ENCODE measurements at regions of chr5 and their contacts with region 1.

Region 1: DNA sequence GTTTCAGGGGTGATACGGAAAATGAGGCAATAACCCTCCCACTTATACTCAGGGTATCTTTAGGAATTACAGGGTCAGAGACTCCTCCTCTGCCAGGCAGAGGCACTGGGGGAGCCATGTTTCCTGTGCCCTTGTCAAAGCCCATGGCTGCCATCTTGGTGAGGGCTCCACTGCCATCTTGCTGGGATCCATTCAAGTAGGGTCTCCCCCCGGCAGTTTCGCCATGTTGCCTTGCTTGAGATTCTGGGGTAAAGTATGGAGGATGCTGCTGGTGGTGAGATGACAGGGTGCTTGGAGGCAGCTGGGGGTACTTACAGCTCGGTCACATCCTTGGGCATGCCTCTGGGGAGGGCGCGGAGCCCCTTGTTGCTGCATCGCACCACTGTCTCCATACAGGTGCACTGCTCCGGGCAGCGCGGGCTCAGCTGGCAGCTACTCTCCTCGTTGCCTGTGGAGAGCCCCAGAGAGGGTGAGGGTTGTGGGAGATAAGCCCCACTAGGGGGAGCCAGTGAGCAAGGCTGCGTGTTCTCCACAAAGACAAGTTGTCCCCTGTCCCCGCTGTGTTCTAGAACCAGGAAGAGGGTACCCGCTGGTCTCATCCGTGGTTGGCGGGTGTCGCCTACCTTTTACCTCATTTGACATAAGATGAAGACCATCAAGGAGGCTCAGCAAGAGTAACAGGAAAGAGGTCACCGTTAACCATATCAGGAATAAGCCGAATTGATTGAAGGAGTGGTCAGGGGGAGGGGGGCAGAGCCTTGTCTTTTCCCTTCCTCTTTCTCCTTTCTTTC is 169.0 kb upstream of the PANK3 start:
- DNase-seq: peak; percentile 24 to 67 (median 49)
- ATAC-seq: peak; percentile 49 to 80 (median 76)
- H3K4me3 ChIP-seq: no peak overlapping the region
- H3K27ac ChIP-seq: no peak overlapping the region
- H3K4me1 ChIP-seq: no peaks in the 10 kb centered on the region
- H3K27me3 ChIP-seq: no peaks in the 10 kb centered on the region
- CTCF ChIP-seq: peak; percentile 44 to 68 (median 52)
- POLR2A ChIP-seq: no peak

Region 2: DNA sequence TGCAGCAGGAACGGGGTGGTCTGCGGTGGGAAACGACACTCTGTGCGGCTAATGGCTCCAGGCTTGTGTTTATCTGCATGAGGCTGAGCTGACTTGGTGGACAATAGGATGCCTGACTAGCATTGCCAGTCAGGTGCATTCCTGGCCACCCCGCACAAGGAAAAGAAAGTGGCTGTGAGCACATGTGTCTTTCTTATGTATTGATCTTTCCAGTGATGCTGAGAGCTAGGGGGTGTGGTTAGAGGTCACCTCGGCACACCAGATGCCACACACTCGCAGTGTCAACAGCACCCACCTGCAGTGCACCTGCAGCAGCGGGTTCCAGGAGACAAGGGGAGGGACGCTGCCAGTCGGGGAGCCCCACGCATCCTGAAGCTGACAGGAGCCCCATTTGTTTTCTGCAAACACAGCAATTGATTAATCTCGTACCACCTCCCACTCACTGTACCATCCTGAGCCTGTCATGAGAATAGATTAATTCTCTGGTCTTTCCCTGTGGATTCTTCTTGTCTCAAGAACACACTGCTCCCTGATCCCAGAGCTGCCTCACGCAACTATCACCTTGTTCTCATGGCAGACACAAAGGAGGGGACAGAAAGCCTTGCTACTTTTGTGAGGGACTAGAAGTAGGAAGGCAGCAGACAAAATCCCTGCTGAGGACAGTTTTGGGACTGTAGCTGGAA is 708.5 kb before region 1 on chr5:
- intact Hi-C with region 1: no loop called
- DNase-seq: no peak
- ATAC-seq: peak in 1 of 4 donors; percentile 8
- H3K4me3 ChIP-seq: no peak overlapping the region
- H3K27ac ChIP-seq: no peak overlapping the region
- H3K4me1 ChIP-seq: peaks cover 0 to 6% (median 0%) of the 10 kb centered on the region in 12 donors
- H3K27me3 ChIP-seq: no peaks in the 10 kb centered on the region
- CTCF ChIP-seq: no peak
- POLR2A ChIP-seq: no peak

Region 3: GRCh38 chr5:168874713-168875380 is 126.7 kb after region 1 on chr5:
- intact Hi-C with region 1: loop called in 4 of 10 experiments (anchors 5 to 10 kb)
- DNase-seq: no peak
- ATAC-seq: peak in 1 of 4 donors; percentile 24
- H3K4me3 ChIP-seq: no peak overlapping the region
- H3K27ac ChIP-seq: no peak overlapping the region
- H3K4me1 ChIP-seq: peaks cover 0 to 10% (median 1%) of the 10 kb centered on the region in 12 donors
- H3K27me3 ChIP-seq: no peaks in the 10 kb centered on the region
- CTCF ChIP-seq: peak in 6 of 12 donors; percentile 17 to 45 (median 34)
- POLR2A ChIP-seq: no peak

Region 4: GRCh38 chr5:168879929-168880328 is 131.7 kb after region 1 on chr5:
- intact Hi-C with region 1: loop called in 3 of 10 experiments (anchors 5 to 10 kb)
- DNase-seq: peak in 2 of 5 donors; percentile 35 to 39
- ATAC-seq: peak in 3 of 4 donors; percentile 53 to 70 (median 59)
- H3K4me3 ChIP-seq: no peak overlapping the region
- H3K27ac ChIP-seq: peak overlapping the region in 4 of 12 donors; percentile 13 to 45 (median 32)
- H3K4me1 ChIP-seq: peaks cover 0 to 20% (median 3%) of the 10 kb centered on the region in 12 donors
- H3K27me3 ChIP-seq: no peaks in the 10 kb centered on the region
- CTCF ChIP-seq: no peak
- POLR2A ChIP-seq: no peak

Measured in heart left ventricle (tissue), 16 donors.